Caco-2 (cell line): ENCODE measurements at regions of chr18 and their contacts with region 1.

Region 1: GRCh38 chr18:12287684-12288402 is 20.2 kb upstream of the TUBB6 start:
- DNase-seq: peak; percentile 76 to 78
- H3K4me3 ChIP-seq: peak overlapping the region; percentile 26
- H3K4me3 Mint-ChIP-seq: peak overlapping the region; percentile 88
- H3K27ac Mint-ChIP-seq: peak overlapping the region; percentile 68
- H3K4me1 ChIP-seq: peaks cover 11% of the 10 kb centered on the region
- H3K4me1 Mint-ChIP-seq: peaks cover 15% of the 10 kb centered on the region
- H3K27me3 ChIP-seq: no peaks in the 10 kb centered on the region; the same call in 1 of the 2 replicates
- H3K27me3 Mint-ChIP-seq: no peaks in the 10 kb centered on the region
- CTCF ChIP-seq: no peak

Region 2: GRCh38 chr18:11972371-11973174 is 315.3 kb before region 1 on chr18:
- CTCF ChIA-PET with region 1: no interaction called
- POLR2A ChIA-PET with region 1: no interaction called
- intact Hi-C with region 1: no loop called
- DNase-seq: no peak
- H3K4me3 ChIP-seq: no peak overlapping the region
- H3K4me3 Mint-ChIP-seq: no peak overlapping the region
- H3K27ac Mint-ChIP-seq: no peak overlapping the region
- H3K4me1 ChIP-seq: no peaks in the 10 kb centered on the region
- H3K4me1 Mint-ChIP-seq: no peaks in the 10 kb centered on the region
- H3K27me3 ChIP-seq: no peaks in the 10 kb centered on the region
- H3K27me3 Mint-ChIP-seq: no peaks in the 10 kb centered on the region
- CTCF ChIP-seq: no peak

Region 3: DNA sequence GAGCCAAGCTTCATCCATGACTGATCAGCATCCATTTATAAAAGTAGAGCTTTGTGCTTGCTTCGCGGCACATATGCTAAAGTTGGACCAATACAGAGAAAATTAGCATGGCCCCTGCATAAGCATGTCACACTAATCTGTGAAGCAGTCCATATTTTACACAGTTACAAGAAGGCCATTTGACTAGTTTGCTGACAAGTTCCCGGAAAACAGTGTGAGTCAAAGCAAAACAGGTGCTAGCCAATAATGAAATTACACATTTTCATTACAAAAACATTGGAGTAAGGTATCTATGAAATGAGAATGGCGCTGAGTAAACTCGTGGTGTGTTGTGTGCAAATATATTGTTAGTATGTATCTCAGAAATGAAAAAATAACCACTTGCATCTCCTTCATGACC is 189.5 kb before region 1 on chr18:
- CTCF ChIA-PET with region 1: no interaction called
- POLR2A ChIA-PET with region 1: no interaction called
- intact Hi-C with region 1: no loop called
- DNase-seq: no peak
- H3K4me3 ChIP-seq: no peak overlapping the region
- H3K4me3 Mint-ChIP-seq: no peak overlapping the region
- H3K27ac Mint-ChIP-seq: no peak overlapping the region
- H3K4me1 ChIP-seq: no peaks in the 10 kb centered on the region
- H3K4me1 Mint-ChIP-seq: no peaks in the 10 kb centered on the region
- H3K27me3 ChIP-seq: no peaks in the 10 kb centered on the region; the same call in 1 of the 2 replicates
- H3K27me3 Mint-ChIP-seq: peaks cover 19% of the 10 kb centered on the region
- CTCF ChIP-seq: no peak

Region 4: GRCh38 chr18:12233378-12233777 is 54.5 kb before region 1 on chr18:
- CTCF ChIA-PET with region 1: no interaction called
- POLR2A ChIA-PET with region 1: no interaction called
- intact Hi-C with region 1: no loop called
- DNase-seq: no peak
- H3K4me3 ChIP-seq: no peak overlapping the region
- H3K4me3 Mint-ChIP-seq: no peak overlapping the region
- H3K27ac Mint-ChIP-seq: no peak overlapping the region
- H3K4me1 ChIP-seq: no peaks in the 10 kb centered on the region
- H3K4me1 Mint-ChIP-seq: no peaks in the 10 kb centered on the region
- H3K27me3 ChIP-seq: no peaks in the 10 kb centered on the region
- H3K27me3 Mint-ChIP-seq: peaks cover 2% of the 10 kb centered on the region
- CTCF ChIP-seq: no peak

Region 5: DNA sequence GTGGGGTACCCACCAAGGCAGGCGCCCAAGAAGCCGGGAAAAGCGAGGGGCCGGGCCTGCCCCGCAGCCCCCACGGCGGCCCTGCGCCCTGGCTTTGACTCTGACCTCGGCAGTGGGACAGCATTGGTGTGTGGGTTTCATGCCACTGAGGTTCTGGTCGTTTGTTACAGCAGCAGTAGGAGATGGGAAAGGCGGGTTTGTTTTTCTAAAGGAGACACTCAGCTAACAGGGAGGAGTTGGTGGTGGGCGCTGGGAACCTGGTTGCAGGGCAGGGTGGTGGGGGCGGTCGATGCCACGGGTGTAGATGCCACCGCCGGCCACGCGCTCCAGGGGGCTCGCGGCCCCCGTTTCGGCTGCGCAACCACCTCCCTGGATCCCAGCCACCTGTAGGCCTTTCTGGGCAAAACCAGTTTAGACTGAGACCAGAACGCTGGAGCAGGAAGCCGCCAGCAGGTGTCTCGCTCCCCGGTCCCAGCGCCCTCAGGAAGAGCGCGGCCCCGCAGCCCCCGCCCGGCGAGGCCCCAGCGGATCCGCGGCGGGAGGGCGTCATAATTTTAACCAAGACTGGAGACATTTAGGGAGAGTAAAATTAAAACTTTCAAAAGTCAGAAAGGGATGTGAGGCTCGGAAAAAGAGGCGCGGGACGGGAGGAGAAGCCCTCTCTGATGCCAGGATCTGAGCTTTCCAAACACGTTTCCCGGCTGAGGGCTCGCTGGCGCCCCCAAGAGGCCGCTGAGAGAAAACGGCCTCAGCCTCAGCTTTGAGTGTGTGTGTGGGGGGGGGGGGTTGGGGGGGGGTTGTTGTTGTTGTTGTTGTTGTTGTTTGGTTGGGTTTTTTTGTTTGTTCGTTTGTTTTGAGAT is 16.2 kb before region 1 on chr18:
- CTCF ChIA-PET with region 1: interaction called, 27 read pairs
- POLR2A ChIA-PET with region 1: no interaction called
- intact Hi-C with region 1: no loop called
- DNase-seq: peak; percentile 81 to 88
- H3K4me3 ChIP-seq: peak overlapping the region; percentile 44
- H3K4me3 Mint-ChIP-seq: peak overlapping the region; percentile 79
- H3K27ac Mint-ChIP-seq: peak overlapping the region; percentile 56
- H3K4me1 ChIP-seq: no peaks in the 10 kb centered on the region
- H3K4me1 Mint-ChIP-seq: no peaks in the 10 kb centered on the region
- H3K27me3 ChIP-seq: no peaks in the 10 kb centered on the region
- H3K27me3 Mint-ChIP-seq: no peaks in the 10 kb centered on the region
- CTCF ChIP-seq: peak; percentile 80 to 84

Region 6: GRCh38 chr18:12308386-12309100 is 20.7 kb after region 1 on chr18:
- CTCF ChIA-PET with region 1: interaction called, 12 read pairs
- POLR2A ChIA-PET with region 1: no interaction called
- intact Hi-C with region 1: loop called (anchors 1 kb)
- DNase-seq: peak; percentile 72 to 85
- H3K4me3 ChIP-seq: peak overlapping the region; percentile 48
- H3K4me3 Mint-ChIP-seq: peak overlapping the region; percentile 80
- H3K27ac Mint-ChIP-seq: peak overlapping the region; percentile 81
- H3K4me1 ChIP-seq: peaks cover 20% of the 10 kb centered on the region
- H3K4me1 Mint-ChIP-seq: peaks cover 12% of the 10 kb centered on the region
- H3K27me3 ChIP-seq: no peaks in the 10 kb centered on the region
- H3K27me3 Mint-ChIP-seq: no peaks in the 10 kb centered on the region
- CTCF ChIP-seq: no peak

Region 7: GRCh38 chr18:12317664-12318333 is 30.0 kb after region 1 on chr18:
- CTCF ChIA-PET with region 1: no interaction called
- POLR2A ChIA-PET with region 1: interaction called, 12 read pairs
- intact Hi-C with region 1: no loop called
- DNase-seq: no peak
- H3K4me3 ChIP-seq: no peak overlapping the region
- H3K4me3 Mint-ChIP-seq: no peak overlapping the region
- H3K27ac Mint-ChIP-seq: peak overlapping the region; percentile 26
- H3K4me1 ChIP-seq: 0 out of 2 replicates have a peak, but pooled peaks cover 2% of the 10 kb centered on the region
- H3K4me1 Mint-ChIP-seq: no peaks in the 10 kb centered on the region
- H3K27me3 ChIP-seq: no peaks in the 10 kb centered on the region
- H3K27me3 Mint-ChIP-seq: no peaks in the 10 kb centered on the region
- CTCF ChIP-seq: no peak

Region 8: DNA sequence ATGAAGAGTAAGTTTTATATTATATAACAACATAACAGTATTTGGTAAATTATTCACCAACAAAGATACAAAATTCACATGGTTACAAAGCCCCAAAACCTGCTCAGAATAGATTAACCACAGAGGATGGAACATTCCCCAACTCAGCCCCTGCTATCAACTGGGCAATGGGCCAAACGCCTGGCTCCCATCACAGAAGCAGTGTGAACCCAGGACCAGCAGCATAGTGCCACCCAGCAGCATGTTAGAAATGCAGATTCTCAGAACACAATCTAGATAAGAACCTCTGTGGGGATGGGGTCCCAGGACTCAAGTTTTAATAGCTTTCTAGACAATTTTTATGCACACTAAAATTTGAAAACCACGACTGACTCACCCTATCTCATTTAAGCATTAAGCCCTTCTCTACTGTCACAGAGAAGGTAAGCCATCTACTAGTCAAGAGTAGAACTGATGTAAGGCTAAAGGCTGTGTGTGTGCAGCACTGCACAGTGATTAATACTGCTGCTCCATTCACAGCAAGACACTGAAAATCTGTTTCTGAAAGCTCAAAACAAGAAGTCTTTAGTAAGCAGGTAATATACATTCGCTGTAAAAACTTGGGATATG is 74.0 kb after region 1 on chr18:
- CTCF ChIA-PET with region 1: no interaction called
- POLR2A ChIA-PET with region 1: no interaction called
- intact Hi-C with region 1: no loop called
- DNase-seq: no peak
- H3K4me3 ChIP-seq: no peak overlapping the region
- H3K4me3 Mint-ChIP-seq: no peak overlapping the region
- H3K27ac Mint-ChIP-seq: no peak overlapping the region
- H3K4me1 ChIP-seq: no peaks in the 10 kb centered on the region
- H3K4me1 Mint-ChIP-seq: no peaks in the 10 kb centered on the region
- H3K27me3 ChIP-seq: no peaks in the 10 kb centered on the region
- H3K27me3 Mint-ChIP-seq: no peaks in the 10 kb centered on the region
- CTCF ChIP-seq: no peak